ENCODE measurements at regions of chr9 and their contacts with region 1.

Region 1: GRCh38 chr9:125805057-125805456 is 57.9 kb downstream of the PBX3 start:
- DNase-seq: no peak
- H3K4me3 Mint-ChIP-seq: no peak overlapping the region
- H3K27ac Mint-ChIP-seq: no peak overlapping the region
- H3K4me1 Mint-ChIP-seq: no peaks in the 10 kb centered on the region
- H3K27me3 Mint-ChIP-seq: peaks cover 2% of the 10 kb centered on the region

Region 2: GRCh38 chr9:124975131-124975530 is 829.9 kb before region 1 on chr9:
- intact Hi-C with region 1: loop called (anchors 5 kb)
- DNase-seq: no peak
- H3K4me3 Mint-ChIP-seq: no peak overlapping the region
- H3K27ac Mint-ChIP-seq: no peak overlapping the region
- H3K4me1 Mint-ChIP-seq: peaks cover 6% of the 10 kb centered on the region
- H3K27me3 Mint-ChIP-seq: no peaks in the 10 kb centered on the region

Measured in activated T-helper 1 cell treated with anti-CD3 and anti-CD28 coated beads, Interleukin-12 subunit alpha, Interleukin-12 subunit beta, Interleukin-2, Interleukin-4 antibody, amounts not matched to agents 30 ng/mL and 10 ng/mL and 1 ng/mL, durations not matched to agents 14 hours and 24 hours and 36 hours (primary cell).